IMR-90 (cell line): ENCODE measurements at regions of chr1 and their contacts with region 1.

Region 1: GRCh38 chr1:90964444-90965035 is 57.3 kb downstream of the ZNF644 start:
- DNase-seq: peak; percentile 21
- ATAC-seq: peak; percentile 75
- H3K4me3 ChIP-seq: no peak overlapping the region
- H3K27ac ChIP-seq: no peak overlapping the region
- H3K4me1 ChIP-seq: no peaks in the 10 kb centered on the region
- H3K27me3 ChIP-seq: no peaks in the 10 kb centered on the region
- CTCF ChIP-seq: peak; percentile 54
- POLR2A ChIP-seq: no peak
- RAD21 ChIP-seq: peak; percentile 52

Region 2: GRCh38 chr1:90579212-90579802 is 385.2 kb before region 1 on chr1:
- CTCF ChIA-PET with region 1: no interaction called
- POLR2A ChIA-PET with region 1: no interaction called
- dilution Hi-C with region 1: no loop called
- in situ Hi-C with region 1: loop called (anchors 25 kb)
- intact Hi-C with region 1: loop called (anchors 2 kb)
- DNase-seq: peak; percentile 40
- ATAC-seq: peak; percentile 54; the same call in 1 of the 2 replicates
- H3K4me3 ChIP-seq: no peak overlapping the region
- H3K27ac ChIP-seq: no peak overlapping the region
- H3K4me1 ChIP-seq: no peaks in the 10 kb centered on the region
- H3K27me3 ChIP-seq: no peaks in the 10 kb centered on the region
- CTCF ChIP-seq: peak; percentile 56
- POLR2A ChIP-seq: no peak
- RAD21 ChIP-seq: peak; percentile 50

Region 3: GRCh38 chr1:90721210-90722194 is 243.0 kb before region 1 on chr1:
- CTCF ChIA-PET with region 1: no interaction called
- POLR2A ChIA-PET with region 1: no interaction called
- dilution Hi-C with region 1: no loop called
- in situ Hi-C with region 1: loop called (anchors 10 kb)
- intact Hi-C with region 1: loop called (anchors 1 kb)
- DNase-seq: peak; percentile 41
- ATAC-seq: peak; percentile 69
- H3K4me3 ChIP-seq: no peak overlapping the region
- H3K27ac ChIP-seq: no peak overlapping the region
- H3K4me1 ChIP-seq: no peaks in the 10 kb centered on the region
- H3K27me3 ChIP-seq: peaks cover 85% of the 10 kb centered on the region
- CTCF ChIP-seq: peak; percentile 78
- POLR2A ChIP-seq: no peak
- RAD21 ChIP-seq: peak; percentile 70

Region 4: GRCh38 chr1:90850898-90851710 is 113.4 kb before region 1 on chr1:
- CTCF ChIA-PET with region 1: no interaction called
- POLR2A ChIA-PET with region 1: no interaction called
- dilution Hi-C with region 1: no loop called
- in situ Hi-C with region 1: no loop called
- intact Hi-C with region 1: loop called (anchors 5 kb)
- DNase-seq: peak; percentile 55
- ATAC-seq: peak; percentile 100
- H3K4me3 ChIP-seq: peak overlapping the region; percentile 55
- H3K27ac ChIP-seq: no peak overlapping the region
- H3K4me1 ChIP-seq: no peaks in the 10 kb centered on the region
- H3K27me3 ChIP-seq: peaks cover 18% of the 10 kb centered on the region
- CTCF ChIP-seq: peak; percentile 55
- POLR2A ChIP-seq: no peak
- RAD21 ChIP-seq: peak; percentile 28

Region 5: GRCh38 chr1:91924146-91924545 is 959.6 kb after region 1 on chr1:
- CTCF ChIA-PET with region 1: interaction called, 12 read pairs
- POLR2A ChIA-PET with region 1: no interaction called
- dilution Hi-C with region 1: no loop called
- in situ Hi-C with region 1: no loop called
- intact Hi-C with region 1: no loop called
- DNase-seq: peak; percentile 91
- ATAC-seq: peak; percentile 75
- H3K4me3 ChIP-seq: no peak overlapping the region
- H3K27ac ChIP-seq: no peak overlapping the region
- H3K4me1 ChIP-seq: peaks cover 4% of the 10 kb centered on the region
- H3K27me3 ChIP-seq: no peaks in the 10 kb centered on the region
- CTCF ChIP-seq: no peak
- POLR2A ChIP-seq: no peak
- RAD21 ChIP-seq: no peak